Activated CD4-positive, alpha-beta memory T cell treated with anti-CD3 and anti-CD28 coated beads for 36 hours (primary cell): ENCODE measurements at regions of chr1 and their contacts with region 1.

Region 1: GRCh38 chr1:86499987-86500593 is 31.4 kb downstream of the CLCA1 start:
- DNase-seq: no peak
- H3K4me3 Mint-ChIP-seq: no peak overlapping the region
- H3K27ac Mint-ChIP-seq: no peak overlapping the region
- H3K4me1 Mint-ChIP-seq: peaks cover 14% of the 10 kb centered on the region
- H3K27me3 Mint-ChIP-seq: peaks cover 13% of the 10 kb centered on the region

Region 2: GRCh38 chr1:85042413-85042812 is 1457.7 kb before region 1 on chr1:
- CTCF ChIA-PET with region 1: no interaction called
- POLR2A ChIA-PET with region 1: no interaction called
- intact Hi-C with region 1: no loop called
- DNase-seq: no peak
- H3K4me3 Mint-ChIP-seq: no peak overlapping the region
- H3K27ac Mint-ChIP-seq: no peak overlapping the region
- H3K4me1 Mint-ChIP-seq: no peaks in the 10 kb centered on the region
- H3K27me3 Mint-ChIP-seq: peaks cover 21% of the 10 kb centered on the region

Region 3: GRCh38 chr1:86395771-86396497 is 104.2 kb before region 1 on chr1 and contains the start of gene ODF2L:
- CTCF ChIA-PET with region 1: interaction called, 15 read pairs
- POLR2A ChIA-PET with region 1: no interaction called
- intact Hi-C with region 1: loop called (anchors 5 kb)
- DNase-seq: peak; percentile 94
- H3K4me3 Mint-ChIP-seq: peak within 1 kb of the TSS; percentile 97
- H3K27ac Mint-ChIP-seq: peak within 1 kb of the TSS; percentile 92
- H3K4me1 Mint-ChIP-seq: peaks cover 48% of the 10 kb centered on the region
- H3K27me3 Mint-ChIP-seq: no peaks in the 10 kb centered on the region
- total RNA-seq, gene ODF2L: 31.5 to 32.3 TPM

Region 4: DNA sequence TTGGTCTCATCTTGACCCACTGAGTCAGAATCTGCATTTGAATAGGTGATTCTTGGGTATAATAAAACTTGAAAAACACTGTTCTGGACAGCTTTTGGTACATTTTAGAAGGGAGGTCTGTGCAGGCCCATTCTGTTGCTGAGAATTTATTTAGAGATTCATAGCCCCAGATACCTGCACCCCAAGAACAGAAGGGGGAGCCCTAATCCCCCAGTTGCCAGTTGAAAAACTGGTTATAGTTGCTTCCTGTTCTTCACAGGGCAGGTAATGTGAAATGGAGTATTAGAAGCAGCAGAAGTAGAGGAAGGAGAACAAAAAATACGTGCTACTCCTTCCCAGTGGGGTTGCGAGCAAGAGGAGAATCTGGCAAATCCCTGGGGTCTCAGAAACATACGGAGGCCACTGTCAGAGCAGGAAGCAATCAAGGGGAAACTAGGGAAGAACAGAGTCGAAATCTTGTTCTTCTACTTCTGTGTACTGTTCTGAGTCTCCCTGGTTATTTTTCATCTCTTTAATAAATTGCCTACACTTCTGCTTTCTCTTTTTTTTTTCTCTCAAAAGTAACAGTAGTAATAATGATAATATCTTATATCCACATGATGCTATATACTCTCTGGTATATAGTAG is 80.7 kb before region 1 on chr1:
- CTCF ChIA-PET with region 1: interaction called, 6 read pairs
- POLR2A ChIA-PET with region 1: no interaction called
- intact Hi-C with region 1: loop called (anchors 1 kb)
- DNase-seq: peak; percentile 53
- H3K4me3 Mint-ChIP-seq: no peak overlapping the region
- H3K27ac Mint-ChIP-seq: no peak overlapping the region
- H3K4me1 Mint-ChIP-seq: peaks cover 4% of the 10 kb centered on the region
- H3K27me3 Mint-ChIP-seq: peaks cover 1% of the 10 kb centered on the region

Region 5: DNA sequence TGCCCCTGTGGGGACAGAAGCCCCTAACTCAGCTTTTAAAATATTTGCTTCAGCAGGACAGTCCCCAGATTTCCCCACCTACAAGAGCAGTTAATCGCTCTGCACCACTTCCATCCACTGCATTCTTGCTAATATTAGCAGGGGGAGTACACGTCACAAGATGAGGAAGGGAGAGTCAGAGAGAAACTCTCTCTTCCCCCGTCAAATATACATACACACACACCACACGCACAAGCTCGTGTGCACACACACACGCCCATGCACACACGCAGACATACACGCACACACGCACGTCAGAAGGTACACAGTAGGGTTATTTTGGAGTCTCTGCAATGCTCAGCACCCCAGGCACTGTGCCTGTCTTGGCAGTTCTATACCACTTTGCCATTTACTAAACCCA is 29.2 kb before region 1 on chr1:
- CTCF ChIA-PET with region 1: interaction called, 13 read pairs
- POLR2A ChIA-PET with region 1: no interaction called
- intact Hi-C with region 1: loop called (anchors 1 kb)
- DNase-seq: no peak
- H3K4me3 Mint-ChIP-seq: no peak overlapping the region
- H3K27ac Mint-ChIP-seq: no peak overlapping the region
- H3K4me1 Mint-ChIP-seq: no peaks in the 10 kb centered on the region
- H3K27me3 Mint-ChIP-seq: peaks cover 6% of the 10 kb centered on the region

Region 6: GRCh38 chr1:86487131-86487810 is 12.8 kb before region 1 on chr1:
- CTCF ChIA-PET with region 1: interaction called, 33 read pairs
- POLR2A ChIA-PET with region 1: no interaction called
- intact Hi-C with region 1: no loop called
- DNase-seq: no peak
- H3K4me3 Mint-ChIP-seq: no peak overlapping the region
- H3K27ac Mint-ChIP-seq: no peak overlapping the region
- H3K4me1 Mint-ChIP-seq: no peaks in the 10 kb centered on the region
- H3K27me3 Mint-ChIP-seq: no peaks in the 10 kb centered on the region

Region 7: DNA sequence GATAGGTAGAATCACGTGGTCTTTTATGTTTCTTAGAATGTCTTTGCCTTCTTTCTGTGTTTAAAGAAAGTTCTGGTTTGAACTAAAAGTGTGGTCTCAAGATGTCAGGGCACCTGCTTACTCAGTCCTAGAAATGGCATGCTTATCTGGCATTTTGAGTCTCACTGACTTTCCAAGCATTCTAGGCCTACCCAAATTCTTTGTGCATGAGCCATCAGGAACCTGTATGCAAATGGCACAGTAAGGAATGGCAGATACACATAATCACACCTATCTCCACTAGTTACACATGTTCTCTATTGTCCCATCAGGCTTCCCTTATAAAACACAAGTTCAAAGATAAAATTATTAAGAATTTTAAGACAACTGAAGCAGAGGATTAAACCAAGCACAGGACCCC is 17.2 kb after region 1 on chr1:
- CTCF ChIA-PET with region 1: interaction called, 13 read pairs
- POLR2A ChIA-PET with region 1: no interaction called
- intact Hi-C with region 1: no loop called
- DNase-seq: no peak
- H3K4me3 Mint-ChIP-seq: no peak overlapping the region
- H3K27ac Mint-ChIP-seq: no peak overlapping the region
- H3K4me1 Mint-ChIP-seq: no peaks in the 10 kb centered on the region
- H3K27me3 Mint-ChIP-seq: no peaks in the 10 kb centered on the region

Region 8: DNA sequence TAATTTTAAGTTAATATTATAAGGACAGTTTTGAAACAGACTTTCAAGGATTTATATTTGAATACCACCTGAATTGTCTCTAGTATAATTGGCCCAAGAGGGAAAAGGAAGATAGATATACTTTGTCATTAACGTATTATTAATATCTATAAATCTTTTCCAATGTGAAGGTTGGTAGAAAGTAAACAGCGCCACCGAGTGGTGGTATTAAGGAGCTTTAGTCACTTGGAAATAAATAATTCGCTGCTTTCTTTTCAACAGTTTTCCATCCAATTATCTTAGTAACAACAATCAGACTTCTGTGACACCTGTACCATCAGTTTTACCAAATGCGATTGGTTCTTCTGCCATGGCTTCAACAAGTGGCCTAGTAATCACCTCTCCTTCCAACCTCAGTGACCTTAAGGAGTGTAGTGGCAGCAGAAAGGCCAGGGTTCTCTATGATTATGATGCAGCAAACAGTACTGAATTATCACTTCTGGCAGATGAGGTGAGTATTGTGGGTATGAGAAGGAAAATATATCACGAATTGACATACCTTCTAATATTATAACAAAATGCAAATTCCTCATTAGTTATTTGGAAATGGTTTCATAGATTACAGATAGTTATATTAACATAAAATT is 242.0 kb after region 1 on chr1:
- CTCF ChIA-PET with region 1: interaction called, 10 read pairs
- POLR2A ChIA-PET with region 1: no interaction called
- intact Hi-C with region 1: loop called (anchors 5 kb)
- DNase-seq: peak; percentile 32
- H3K4me3 Mint-ChIP-seq: no peak overlapping the region
- H3K27ac Mint-ChIP-seq: no peak overlapping the region
- H3K4me1 Mint-ChIP-seq: peaks cover 4% of the 10 kb centered on the region
- H3K27me3 Mint-ChIP-seq: no peaks in the 10 kb centered on the region

Region 9: GRCh38 chr1:86788300-86789206 is 288.5 kb after region 1 on chr1:
- CTCF ChIA-PET with region 1: no interaction called
- POLR2A ChIA-PET with region 1: no interaction called
- intact Hi-C with region 1: no loop called
- DNase-seq: no peak
- H3K4me3 Mint-ChIP-seq: no peak overlapping the region
- H3K27ac Mint-ChIP-seq: no peak overlapping the region
- H3K4me1 Mint-ChIP-seq: no peaks in the 10 kb centered on the region
- H3K27me3 Mint-ChIP-seq: no peaks in the 10 kb centered on the region